ENCODE measurements at regions of chr1 and their contacts with region 1.

Region 1: DNA sequence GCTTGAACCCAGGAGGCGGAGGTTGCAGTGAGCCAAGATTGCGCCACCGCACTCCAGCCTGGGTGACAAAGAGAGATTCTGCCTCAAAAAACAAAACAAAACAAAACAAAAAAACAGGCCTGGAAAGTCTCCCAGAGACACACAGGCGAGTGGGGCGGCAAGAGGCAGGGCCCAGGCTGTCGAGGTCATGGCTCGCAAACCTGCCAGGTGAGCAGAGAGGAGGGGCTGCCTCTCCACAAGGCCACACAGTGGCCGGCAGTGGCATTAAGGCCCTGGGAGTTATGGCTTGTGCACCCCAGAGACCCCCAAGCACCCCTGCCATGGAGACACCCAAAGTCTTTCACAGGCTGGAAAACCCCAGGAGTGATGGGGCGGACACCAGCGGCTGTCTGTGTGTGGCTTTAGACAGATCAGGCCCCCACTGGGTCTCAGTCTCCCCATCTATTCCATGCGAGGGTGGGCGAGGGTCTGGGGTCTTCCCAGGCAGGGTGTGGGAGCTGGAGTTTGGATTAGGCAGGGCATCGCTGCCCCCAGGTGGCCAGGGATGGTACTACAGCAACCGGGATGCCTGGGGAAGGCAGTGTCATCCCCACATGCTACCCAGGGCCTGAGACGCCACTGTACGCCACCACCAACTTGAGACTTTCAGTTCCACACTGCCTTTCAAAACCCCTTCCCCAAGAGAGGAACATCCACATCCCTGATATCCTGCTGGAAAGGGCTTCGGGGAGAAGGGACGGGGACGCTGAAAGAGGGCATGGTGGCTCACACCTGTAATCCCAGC is 7.3 kb upstream of the CTRC start:
- DNase-seq: peak; percentile 70 to 77
- ATAC-seq: peak; percentile 53 to 81 (median 72)
- H3K4me3 ChIP-seq: no peak overlapping the region
- H3K27ac ChIP-seq: no peak overlapping the region
- H3K4me1 ChIP-seq: peaks cover 5 to 28% (median 11%) of the 10 kb centered on the region in 9 donors
- H3K27me3 ChIP-seq: no peaks in the 10 kb centered on the region
- CTCF ChIP-seq: peak; percentile 94 to 99 (median 96)

Region 2: DNA sequence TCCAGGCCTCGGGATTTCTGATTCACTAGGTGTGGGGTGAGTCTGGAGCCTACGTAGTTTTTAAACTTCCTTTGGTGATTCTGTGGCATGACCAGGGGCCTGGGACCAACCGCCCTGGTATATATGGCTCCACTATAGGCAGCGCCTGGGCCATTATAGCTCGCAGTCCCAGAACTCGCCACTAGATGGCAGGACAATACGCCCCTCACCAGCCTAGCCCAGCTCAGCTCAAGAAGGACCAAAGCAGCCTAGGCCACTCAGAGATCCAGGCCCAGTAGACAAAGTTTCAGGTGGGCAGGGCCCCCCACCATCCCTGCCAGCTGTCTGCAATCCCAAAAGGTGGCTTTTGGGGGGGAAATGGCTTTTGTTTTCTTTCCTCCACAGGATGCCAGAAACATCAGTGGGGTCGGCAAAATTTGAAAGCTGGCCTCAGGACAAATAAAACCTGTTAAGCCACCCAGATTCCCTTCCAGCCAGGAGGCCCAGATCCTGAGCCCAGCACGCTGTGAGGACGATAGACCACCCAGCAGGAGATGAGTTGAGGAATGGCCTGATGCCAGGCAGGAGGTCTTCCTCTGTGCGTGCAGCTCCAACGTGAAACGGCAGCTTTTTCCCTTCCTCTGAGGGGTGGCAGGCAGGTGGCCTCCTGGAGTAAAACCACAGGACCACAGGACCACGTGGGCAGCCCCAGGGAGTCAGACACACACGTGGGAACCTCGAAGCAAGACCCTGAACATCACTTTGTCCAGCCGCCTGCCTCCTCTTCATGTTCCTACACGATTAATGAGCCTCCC is 302.3 kb before region 1 on chr1:
- intact Hi-C with region 1: loop called in 4 of 10 experiments (anchors 10 kb)
- DNase-seq: peak; percentile 59 to 67
- ATAC-seq: peak; percentile 83 to 94 (median 90)
- H3K4me3 ChIP-seq: no peak overlapping the region
- H3K27ac ChIP-seq: no peak overlapping the region
- H3K4me1 ChIP-seq: no peaks in the 10 kb centered on the region
- H3K27me3 ChIP-seq: peaks cover 0 to 4% (median 0%) of the 10 kb centered on the region in 7 donors
- CTCF ChIP-seq: peak; percentile 82 to 91 (median 87)

Region 3: GRCh38 chr1:15323351-15323988 is 107.5 kb before region 1 on chr1:
- intact Hi-C with region 1: loop called (anchors 1 to 5 kb)
- DNase-seq: peak; percentile 67 to 77
- ATAC-seq: peak; percentile 77 to 91 (median 88)
- H3K4me3 ChIP-seq: no peak overlapping the region
- H3K27ac ChIP-seq: peak overlapping the region in 5 of 10 donors; percentile 13 to 38 (median 29)
- H3K4me1 ChIP-seq: peaks cover 0 to 24% (median 13%) of the 10 kb centered on the region in 9 donors
- H3K27me3 ChIP-seq: peaks cover 0 to under 1% (median 0%) of the 10 kb centered on the region in 7 donors
- CTCF ChIP-seq: peak; percentile 96 to 100 (median 98)

Region 4: DNA sequence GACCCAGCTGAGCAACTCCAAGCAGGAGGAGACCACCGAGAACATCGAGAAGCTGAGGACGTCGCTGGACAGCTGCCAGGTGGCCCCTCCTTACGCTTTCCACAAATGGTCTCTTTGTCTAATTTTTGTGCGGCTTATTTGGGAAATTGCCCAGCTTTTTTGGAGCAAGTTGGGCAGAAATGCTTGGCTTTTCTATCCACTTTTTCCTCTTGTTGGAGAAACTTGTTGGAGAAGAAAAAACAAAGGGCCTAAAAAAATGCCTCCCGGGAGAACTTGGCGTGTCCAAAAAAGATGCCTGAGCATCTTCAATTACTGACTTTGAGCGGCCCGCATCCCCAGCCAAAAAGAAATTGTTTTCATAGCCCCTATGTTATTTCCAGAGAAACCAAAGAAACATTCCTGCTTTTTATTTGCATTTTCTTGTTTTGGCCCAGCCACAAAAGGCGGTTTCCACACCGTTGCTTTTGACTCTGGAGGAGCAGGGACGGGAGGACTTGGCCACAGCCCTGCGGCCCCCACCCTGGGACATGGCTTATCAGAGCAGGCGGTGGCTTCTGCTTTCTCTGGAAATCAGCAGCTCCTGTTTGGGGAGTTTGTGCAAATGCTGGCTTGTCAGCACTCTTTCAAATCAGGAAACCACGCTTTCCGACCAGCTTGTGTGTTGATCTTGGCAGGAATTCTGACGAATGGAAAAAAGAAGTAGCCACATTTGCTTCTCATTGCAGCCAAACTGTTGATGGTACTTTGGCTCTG is 102.5 kb before region 1 on chr1:
- intact Hi-C with region 1: loop called (anchors 1 to 5 kb)
- DNase-seq: peak; percentile 64 to 84
- ATAC-seq: peak; percentile 71 to 95 (median 88)
- H3K4me3 ChIP-seq: peak overlapping the region in 3 of 10 donors; percentile 1 to 19 (median 19)
- H3K27ac ChIP-seq: peak overlapping the region in 9 of 10 donors; percentile 10 to 77 (median 59)
- H3K4me1 ChIP-seq: peaks cover 3 to 49% (median 26%) of the 10 kb centered on the region in 9 donors
- H3K27me3 ChIP-seq: peaks cover 0 to 4% (median 0%) of the 10 kb centered on the region in 7 donors
- CTCF ChIP-seq: no peak

Region 5: DNA sequence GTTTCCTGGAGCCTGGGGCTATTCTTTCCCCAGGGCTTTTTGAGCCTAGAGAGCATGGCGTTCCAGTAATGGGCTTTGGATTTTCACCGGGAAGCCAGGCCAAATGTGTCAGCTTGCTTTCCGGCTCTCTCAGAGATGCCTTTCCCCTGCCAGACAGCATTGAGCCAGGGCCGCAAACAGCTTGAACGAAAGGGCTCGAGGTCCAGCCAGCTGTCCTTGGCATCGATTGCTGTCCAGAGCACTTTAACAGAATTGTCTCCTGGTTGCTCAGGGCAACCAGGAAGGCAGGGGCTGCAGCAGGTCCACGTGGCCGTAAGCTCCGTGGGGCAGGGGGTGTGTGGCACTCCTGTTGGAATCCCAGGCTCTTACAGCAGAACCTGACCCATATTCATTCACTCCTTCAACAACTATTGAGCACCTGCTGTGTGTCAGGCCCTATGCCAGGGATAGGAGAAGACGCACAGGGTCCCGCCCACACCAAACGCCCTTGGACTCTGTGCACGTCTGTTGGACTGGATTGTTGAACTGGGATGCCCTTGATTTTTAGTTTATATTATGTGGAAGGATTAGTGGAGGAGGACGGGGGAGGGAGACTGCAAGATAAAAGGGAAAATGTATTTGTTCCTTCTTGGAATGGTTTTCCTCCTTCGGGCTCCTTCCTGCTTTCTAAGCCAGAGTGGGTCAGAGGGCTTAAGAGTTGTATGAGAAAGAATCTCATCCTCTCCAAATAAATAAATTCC is 60.0 kb before region 1 on chr1:
- intact Hi-C with region 1: loop called in 1 of 10 experiments (anchors 10 kb)
- DNase-seq: peak; percentile 56 to 60
- ATAC-seq: peak; percentile 66 to 93 (median 84)
- H3K4me3 ChIP-seq: no peak overlapping the region
- H3K27ac ChIP-seq: peak overlapping the region in 6 of 10 donors; percentile 5 to 76 (median 52)
- H3K4me1 ChIP-seq: peaks cover 0 to 19% (median 11%) of the 10 kb centered on the region in 9 donors
- H3K27me3 ChIP-seq: no peaks in the 10 kb centered on the region
- CTCF ChIP-seq: no peak

Region 6: GRCh38 chr1:15409388-15410222 is 21.4 kb before region 1 on chr1 and contains the start of gene EFHD2:
- intact Hi-C with region 1: no loop called
- DNase-seq: peak; percentile 85 to 86
- ATAC-seq: peak; percentile 79 to 96 (median 88)
- H3K4me3 ChIP-seq: peak within 1 kb of the TSS; percentile 70 to 94 (median 84)
- H3K27ac ChIP-seq: peak within 1 kb of the TSS in 9 of 10 donors; percentile 66 to 96 (median 81)
- H3K4me1 ChIP-seq: peaks cover 7 to 58% (median 43%) of the 10 kb centered on the region in 9 donors
- H3K27me3 ChIP-seq: no peaks in the 10 kb centered on the region
- CTCF ChIP-seq: no peak
- total RNA-seq, gene EFHD2: 9.4 to 32.1 (median 13.5) TPM

Measured in heart right ventricle (tissue), 16 donors.